AG04449 (cell line): ENCODE measurements at regions of chr17 and their contacts with region 1.

Region 1: DNA sequence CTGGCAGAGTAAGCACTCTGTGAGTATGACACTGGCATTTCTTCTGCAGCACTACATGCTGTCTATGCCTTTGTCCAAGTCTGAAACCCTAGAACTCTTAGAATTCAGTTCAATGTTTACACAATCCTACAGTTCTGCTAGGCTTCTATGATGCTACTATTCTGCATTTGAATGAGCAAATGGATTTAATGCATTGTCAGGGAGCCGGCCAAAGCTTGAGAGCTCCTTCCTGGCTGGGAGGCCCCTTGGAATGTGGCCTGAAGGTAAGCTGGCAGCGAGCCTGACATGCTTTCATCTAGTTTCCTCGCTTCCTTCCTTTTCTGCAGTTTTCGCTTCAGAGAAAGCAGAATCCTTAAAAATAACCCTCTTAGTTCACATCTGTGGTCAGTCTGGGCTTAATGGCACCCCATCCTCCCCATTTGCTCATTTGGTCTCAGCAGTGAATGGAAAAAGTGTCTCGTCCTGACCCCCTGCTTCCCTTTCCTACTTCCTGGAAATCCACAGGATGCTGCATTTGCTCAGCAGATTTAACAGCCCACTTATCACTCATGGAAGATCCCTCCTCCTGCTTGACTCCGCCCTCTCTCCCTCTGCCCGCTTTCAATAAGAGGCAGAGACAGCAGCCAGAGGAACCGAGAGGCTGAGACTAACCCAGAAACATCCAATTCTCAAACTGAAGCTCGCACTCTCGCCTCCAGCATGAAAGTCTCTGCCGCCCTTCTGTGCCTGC is at the start of gene CCL2:
- DNase-seq: no peak
- H3K4me3 ChIP-seq: peak within 1 kb of the TSS; percentile 67
- CTCF ChIP-seq: no peak

Region 2: GRCh38 chr17:34300652-34301370 is 46.0 kb after region 1 on chr17:
- CTCF ChIA-PET with region 1: interaction called, 11 read pairs
- POLR2A ChIA-PET with region 1: interaction called, 16 read pairs
- DNase-seq: no peak
- H3K4me3 ChIP-seq: no peak overlapping the region
- CTCF ChIP-seq: no peak

Region 3: DNA sequence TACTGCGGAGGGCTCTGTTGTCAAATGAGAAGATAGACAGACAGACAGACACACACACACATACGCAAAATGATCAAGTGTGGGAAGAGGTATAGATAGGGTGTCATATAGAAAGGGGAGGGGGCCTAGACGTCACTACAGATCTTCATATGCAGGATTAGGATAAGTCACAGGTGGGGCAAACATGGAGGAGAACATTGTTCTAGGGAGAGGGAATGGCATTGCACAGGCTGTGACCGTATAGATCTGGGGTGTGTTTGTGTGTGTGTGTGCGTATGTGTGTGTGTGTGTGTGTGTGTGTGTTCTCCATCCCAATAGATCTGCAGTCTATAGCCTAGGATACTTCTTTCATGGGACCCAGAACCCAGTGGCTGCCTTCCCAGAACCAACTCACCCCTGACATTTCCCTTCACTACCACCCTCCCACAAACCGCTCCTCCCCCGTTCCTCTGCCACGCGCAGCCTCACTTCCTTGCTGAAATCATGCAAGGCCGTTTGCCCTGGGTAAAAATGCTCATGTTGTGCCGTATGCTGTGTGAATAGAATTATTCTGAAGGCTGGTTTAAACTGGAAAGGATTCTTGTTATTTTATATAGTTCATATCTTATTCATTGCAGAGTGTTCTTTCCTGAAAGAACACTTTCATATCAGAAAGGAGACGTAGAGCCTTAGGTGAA is 158.8 kb after region 1 on chr17:
- CTCF ChIA-PET with region 1: no interaction called
- POLR2A ChIA-PET with region 1: no interaction called
- DNase-seq: no peak
- H3K4me3 ChIP-seq: no peak overlapping the region
- CTCF ChIP-seq: no peak